GM23248 (cell line): ENCODE measurements at regions of chr4 and their contacts with region 1.

Region 1: GRCh38 chr4:26330186-26330787 is 9.5 kb downstream of the RBPJ start:
- DNase-seq: peak; percentile 76
- H3K4me3 ChIP-seq: no peak overlapping the region
- H3K27ac ChIP-seq: no peak overlapping the region
- H3K4me1 ChIP-seq: peaks cover 44% of the 10 kb centered on the region
- H3K27me3 ChIP-seq: no peaks in the 10 kb centered on the region

Region 2: DNA sequence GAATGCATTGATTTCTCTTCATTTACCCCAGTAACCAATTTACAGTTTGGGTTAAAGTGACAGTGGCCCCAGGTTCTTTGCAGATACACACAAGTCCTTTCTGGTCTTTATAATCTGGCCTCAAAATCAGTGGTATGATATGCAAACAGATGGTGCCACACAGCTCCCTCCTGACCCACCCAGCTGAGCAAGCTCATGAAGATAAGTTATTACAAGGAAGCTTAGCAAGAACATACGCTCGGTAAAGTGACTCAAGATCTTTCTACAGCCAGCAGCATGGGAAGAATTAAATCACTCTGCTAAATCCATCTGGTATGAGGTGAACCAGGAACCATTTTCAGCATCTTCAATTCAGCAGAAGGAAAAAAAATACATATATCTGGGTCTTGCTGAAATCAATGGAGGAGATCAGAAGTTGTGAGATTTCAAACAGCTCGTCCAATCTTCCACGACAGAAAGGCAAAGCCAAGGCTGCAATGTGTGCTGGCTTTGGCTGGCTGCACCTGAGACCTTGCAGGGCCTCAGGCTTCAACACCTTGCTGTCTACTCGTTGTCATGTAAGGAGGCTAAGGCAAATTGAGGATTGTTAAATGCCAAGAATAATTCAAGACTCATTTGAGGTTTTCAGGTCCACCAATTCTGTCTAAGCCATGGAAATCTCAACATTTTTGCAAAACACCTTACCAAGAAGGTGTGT is 495.7 kb before region 1 on chr4:
- in situ Hi-C with region 1: no loop called
- DNase-seq: no peak
- H3K4me3 ChIP-seq: no peak overlapping the region
- H3K27ac ChIP-seq: no peak overlapping the region
- H3K4me1 ChIP-seq: no peaks in the 10 kb centered on the region
- H3K27me3 ChIP-seq: no peaks in the 10 kb centered on the region

Region 3: DNA sequence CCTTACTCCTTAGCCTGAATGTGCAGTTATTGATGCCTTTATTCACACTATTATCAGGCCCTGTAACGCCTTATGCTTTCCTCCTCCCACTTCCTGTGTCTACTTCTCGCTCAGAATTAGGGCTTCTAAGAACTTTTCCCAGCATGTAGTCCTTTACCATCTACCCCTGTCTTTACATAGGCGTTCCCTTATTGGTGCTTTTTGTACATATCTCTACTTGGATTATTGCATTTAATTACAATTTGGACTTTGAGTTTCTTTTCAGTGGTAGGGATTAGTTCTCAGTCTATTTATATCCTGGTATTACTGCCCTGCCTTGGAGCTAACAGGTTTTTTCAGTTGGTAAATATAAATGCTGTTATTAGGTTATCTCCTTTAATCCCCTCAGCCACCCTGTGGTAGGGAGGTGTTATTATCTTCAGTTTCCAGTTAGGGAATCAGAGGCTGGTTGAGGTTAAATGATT is 74.5 kb after region 1 on chr4:
- in situ Hi-C with region 1: loop called (anchors 10 kb)
- DNase-seq: no peak
- H3K4me3 ChIP-seq: no peak overlapping the region
- H3K27ac ChIP-seq: no peak overlapping the region
- H3K4me1 ChIP-seq: peaks cover 6% of the 10 kb centered on the region
- H3K27me3 ChIP-seq: no peaks in the 10 kb centered on the region